ENCODE measurements at regions of chr3 and their contacts with region 1.

Region 1: DNA sequence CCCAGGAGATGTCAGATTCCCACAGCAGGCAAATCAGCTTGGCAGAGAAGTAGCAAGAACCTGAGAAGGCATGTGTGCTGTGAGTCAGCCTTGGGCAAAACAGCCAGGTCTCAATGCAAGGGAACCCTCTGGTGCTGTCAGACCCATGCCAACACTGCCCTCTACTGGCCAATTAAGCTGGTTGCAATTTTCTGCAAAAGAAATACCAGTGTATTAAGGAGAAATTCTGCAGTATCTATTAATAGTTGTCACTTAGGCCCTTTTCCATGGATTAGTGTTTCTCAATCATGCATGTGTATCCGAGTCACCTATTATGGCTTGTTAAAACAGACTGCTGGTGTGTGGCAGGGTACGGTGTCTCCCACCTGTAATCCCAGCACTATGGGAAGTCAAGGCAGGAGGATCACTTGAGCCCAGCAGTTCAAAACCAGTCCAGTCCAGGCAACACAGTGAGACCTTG is 26.2 kb downstream of the MAP4 start:
- DNase-seq: peak; percentile 75
- H3K4me3 Mint-ChIP-seq: no peak overlapping the region
- H3K27ac Mint-ChIP-seq: no peak overlapping the region
- H3K4me1 Mint-ChIP-seq: peaks cover 10% of the 10 kb centered on the region
- H3K27me3 Mint-ChIP-seq: no peaks in the 10 kb centered on the region

Region 2: DNA sequence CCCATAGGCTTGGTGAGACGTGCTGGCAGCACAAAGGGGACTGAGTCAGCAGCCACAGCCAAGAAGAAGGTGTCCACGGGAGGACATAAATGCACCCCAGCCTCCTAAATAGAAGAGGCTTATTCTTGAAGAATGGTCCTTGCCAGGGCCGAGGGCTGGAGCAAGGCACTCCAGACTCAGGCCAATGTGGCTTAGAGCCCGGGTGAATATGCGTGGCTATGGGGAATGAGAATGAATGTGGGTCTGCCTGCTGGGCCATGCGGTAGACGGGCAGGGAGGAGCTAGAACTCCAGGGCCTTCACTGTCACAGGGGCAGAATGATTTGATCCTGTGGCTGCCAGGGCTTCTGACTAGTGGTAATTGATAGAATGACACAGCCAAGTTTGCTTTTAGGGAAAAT is 153.0 kb before region 1 on chr3:
- CTCF ChIA-PET with region 1: interaction called, 39 read pairs
- POLR2A ChIA-PET with region 1: no interaction called
- DNase-seq: no peak
- H3K4me3 Mint-ChIP-seq: no peak overlapping the region
- H3K27ac Mint-ChIP-seq: no peak overlapping the region
- H3K4me1 Mint-ChIP-seq: no peaks in the 10 kb centered on the region
- H3K27me3 Mint-ChIP-seq: no peaks in the 10 kb centered on the region

Region 3: GRCh38 chr3:47961815-47962618 is 28.0 kb before region 1 on chr3:
- CTCF ChIA-PET with region 1: interaction called, 13 read pairs
- POLR2A ChIA-PET with region 1: no interaction called
- DNase-seq: peak; percentile 59
- H3K4me3 Mint-ChIP-seq: no peak overlapping the region
- H3K27ac Mint-ChIP-seq: peak overlapping the region; percentile 50
- H3K4me1 Mint-ChIP-seq: peaks cover 27% of the 10 kb centered on the region
- H3K27me3 Mint-ChIP-seq: no peaks in the 10 kb centered on the region

Region 4: GRCh38 chr3:48039487-48040190 is 49.6 kb after region 1 on chr3:
- CTCF ChIA-PET with region 1: no interaction called
- POLR2A ChIA-PET with region 1: no interaction called
- DNase-seq: no peak
- H3K4me3 Mint-ChIP-seq: no peak overlapping the region
- H3K27ac Mint-ChIP-seq: no peak overlapping the region
- H3K4me1 Mint-ChIP-seq: peaks cover 19% of the 10 kb centered on the region
- H3K27me3 Mint-ChIP-seq: no peaks in the 10 kb centered on the region